CD8-positive, alpha-beta T cell (primary cell): ENCODE measurements at regions of chr10 and their contacts with region 1.

Region 1: DNA sequence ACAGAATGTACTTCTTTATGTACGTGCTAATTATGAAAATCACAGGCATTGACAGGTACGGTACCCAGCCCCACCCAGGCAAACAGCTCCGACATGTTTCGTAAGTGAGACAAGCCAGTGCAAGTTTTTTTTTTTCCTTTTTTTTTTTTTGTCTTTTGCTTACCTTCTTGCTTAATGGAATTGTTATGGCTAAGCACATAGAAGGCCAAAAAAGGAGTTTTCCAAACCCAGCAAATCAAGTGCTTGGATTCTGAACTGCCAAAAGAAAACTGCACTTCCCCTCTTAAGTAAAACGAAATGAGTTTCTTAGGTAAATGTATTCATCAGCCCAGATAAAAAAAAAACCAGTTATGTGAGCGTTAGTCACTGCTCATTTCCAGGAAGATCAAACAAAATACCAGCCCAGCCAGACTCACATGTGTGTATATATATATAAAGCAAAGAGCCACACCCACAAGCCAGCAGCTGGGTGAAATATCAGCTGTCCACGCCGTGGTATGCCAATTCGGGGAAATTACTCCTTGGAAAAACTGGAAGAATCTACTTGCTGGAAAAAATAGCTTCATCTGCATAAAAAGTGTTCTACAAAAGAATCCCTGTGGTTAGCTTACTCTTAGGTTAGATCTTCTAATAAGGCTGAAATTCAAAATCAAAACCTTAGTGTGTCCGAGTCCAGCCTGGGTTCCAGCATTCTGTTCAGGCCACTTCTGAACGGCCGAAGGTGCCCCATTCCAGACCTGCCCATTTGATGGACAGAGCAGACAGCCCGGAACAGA is 8.0 kb downstream of the KLF6 start:
- DNase-seq: peak in 7 of 9 experiments; percentile 41 to 82 (median 55)
- ATAC-seq: peak; percentile 57
- H3K4me3 ChIP-seq: no peak overlapping the region
- H3K4me3 Mint-ChIP-seq: peak overlapping the region; percentile 3
- H3K27ac ChIP-seq: peak overlapping the region; percentile 36 to 93
- H3K27ac Mint-ChIP-seq: peak overlapping the region; percentile 72
- H3K4me1 ChIP-seq: peaks cover 58% of the 10 kb centered on the region
- H3K4me1 Mint-ChIP-seq: peaks cover 61% of the 10 kb centered on the region
- H3K27me3 ChIP-seq: no peaks in the 10 kb centered on the region
- H3K27me3 Mint-ChIP-seq: no peaks in the 10 kb centered on the region
- CTCF ChIP-seq: no peak

Region 2: DNA sequence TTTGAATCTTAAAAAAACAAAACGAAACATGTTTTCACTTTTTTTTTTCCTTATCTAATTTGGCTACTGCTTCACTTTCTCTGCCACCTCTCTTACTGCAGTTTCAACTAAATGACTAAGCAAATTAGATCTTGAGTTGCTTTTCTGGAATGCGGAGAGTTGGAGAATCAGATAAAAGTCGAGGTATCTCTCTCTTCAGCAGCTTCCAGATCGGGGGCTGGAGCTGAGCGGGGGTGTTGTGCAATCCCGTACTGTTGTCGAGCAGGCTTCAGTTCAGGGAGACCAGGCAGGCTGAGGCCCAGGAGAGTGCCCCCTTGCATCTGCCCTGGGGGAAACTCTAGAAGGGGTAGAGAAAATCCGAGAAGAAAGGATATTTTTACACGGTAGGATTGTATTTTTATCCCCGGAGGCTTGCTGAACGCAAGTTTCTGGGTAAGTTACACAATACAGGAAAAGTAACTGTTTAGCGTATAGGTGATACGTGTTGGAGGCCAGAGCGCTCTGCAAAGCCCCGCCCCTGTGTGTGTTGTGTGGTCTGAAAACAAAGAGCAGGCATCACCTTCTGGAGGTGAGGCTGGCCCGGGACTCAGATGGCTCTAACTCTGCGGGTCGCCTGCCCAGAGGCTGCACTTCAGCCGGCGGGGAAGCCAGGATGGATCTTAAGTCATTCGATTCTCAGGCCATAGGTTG is 108.6 kb before region 1 on chr10:
- CTCF ChIA-PET with region 1: no interaction called
- POLR2A ChIA-PET with region 1: interaction called, 4 read pairs
- intact Hi-C with region 1: loop called (anchors 2 to 5 kb)
- DNase-seq: peak; percentile 40 to 88 (median 66)
- ATAC-seq: peak; percentile 94
- H3K4me3 ChIP-seq: peak overlapping the region; percentile 43 to 64
- H3K4me3 Mint-ChIP-seq: peak overlapping the region; percentile 88
- H3K27ac ChIP-seq: peak overlapping the region; percentile 39 to 78
- H3K27ac Mint-ChIP-seq: peak overlapping the region; percentile 94
- H3K4me1 ChIP-seq: peaks cover 33% of the 10 kb centered on the region
- H3K4me1 Mint-ChIP-seq: peaks cover 43% of the 10 kb centered on the region
- H3K27me3 ChIP-seq: no peaks in the 10 kb centered on the region
- H3K27me3 Mint-ChIP-seq: no peaks in the 10 kb centered on the region
- CTCF ChIP-seq: no peak

Region 3: DNA sequence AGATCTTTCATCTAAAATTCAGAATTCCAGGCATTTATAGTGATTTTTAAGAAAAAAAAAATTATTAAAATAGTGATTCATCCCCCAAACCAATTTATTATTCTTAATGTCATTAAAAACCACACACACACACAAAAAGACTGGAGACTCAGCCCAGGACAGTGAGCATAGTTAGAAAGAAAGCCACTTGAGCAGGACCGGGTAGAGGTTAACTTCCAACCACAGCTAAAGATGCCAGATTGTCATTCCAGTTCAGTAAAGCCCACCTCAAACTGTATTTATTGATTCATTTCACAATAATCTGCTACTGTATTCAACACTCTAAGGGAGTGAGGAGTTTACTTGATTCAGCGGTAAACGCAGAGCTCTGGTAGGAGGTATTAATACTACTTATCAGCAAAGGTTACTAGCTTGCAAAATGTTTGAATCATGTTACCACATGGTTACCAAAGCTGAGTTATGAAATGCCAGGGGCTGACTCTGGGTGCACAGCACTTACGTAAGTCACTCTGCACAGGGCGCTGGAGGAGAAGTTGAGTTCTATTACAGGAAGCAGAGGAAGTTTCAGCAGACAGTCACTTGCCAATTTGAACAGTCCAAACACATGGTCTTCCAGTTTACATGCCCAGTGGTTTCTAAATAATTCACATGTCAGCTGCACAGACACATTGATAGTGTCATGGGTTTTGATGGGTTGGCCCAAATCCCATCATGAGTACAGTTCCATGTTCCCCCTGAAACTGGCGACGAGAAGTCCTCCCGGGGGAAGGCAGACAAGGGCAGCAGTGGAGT is 56.6 kb before region 1 on chr10:
- CTCF ChIA-PET with region 1: no interaction called
- POLR2A ChIA-PET with region 1: no interaction called
- intact Hi-C with region 1: no loop called
- DNase-seq: peak in 2 of 9 experiments; percentile 13 to 41
- ATAC-seq: no peak
- H3K4me3 ChIP-seq: no peak overlapping the region
- H3K4me3 Mint-ChIP-seq: no peak overlapping the region
- H3K27ac ChIP-seq: no peak overlapping the region
- H3K27ac Mint-ChIP-seq: no peak overlapping the region
- H3K4me1 ChIP-seq: no peaks in the 10 kb centered on the region
- H3K4me1 Mint-ChIP-seq: no peaks in the 10 kb centered on the region
- H3K27me3 ChIP-seq: no peaks in the 10 kb centered on the region
- H3K27me3 Mint-ChIP-seq: no peaks in the 10 kb centered on the region
- CTCF ChIP-seq: no peak

Region 4: GRCh38 chr10:3757638-3758490 is 19.1 kb before region 1 on chr10:
- CTCF ChIA-PET with region 1: interaction called, 3 read pairs
- POLR2A ChIA-PET with region 1: interaction called, 8 read pairs
- intact Hi-C with region 1: loop called in 1 of 2 experiments (anchors 2 kb)
- DNase-seq: peak in 7 of 9 experiments; percentile 43 to 86 (median 70)
- ATAC-seq: peak; percentile 82
- H3K4me3 ChIP-seq: no peak overlapping the region
- H3K4me3 Mint-ChIP-seq: peak overlapping the region; percentile 50
- H3K27ac ChIP-seq: peak overlapping the region; percentile 16 to 86
- H3K27ac Mint-ChIP-seq: peak overlapping the region; percentile 95
- H3K4me1 ChIP-seq: peaks cover 8% of the 10 kb centered on the region
- H3K4me1 Mint-ChIP-seq: peaks cover 31% of the 10 kb centered on the region
- H3K27me3 ChIP-seq: no peaks in the 10 kb centered on the region
- H3K27me3 Mint-ChIP-seq: no peaks in the 10 kb centered on the region
- CTCF ChIP-seq: no peak

Region 5: DNA sequence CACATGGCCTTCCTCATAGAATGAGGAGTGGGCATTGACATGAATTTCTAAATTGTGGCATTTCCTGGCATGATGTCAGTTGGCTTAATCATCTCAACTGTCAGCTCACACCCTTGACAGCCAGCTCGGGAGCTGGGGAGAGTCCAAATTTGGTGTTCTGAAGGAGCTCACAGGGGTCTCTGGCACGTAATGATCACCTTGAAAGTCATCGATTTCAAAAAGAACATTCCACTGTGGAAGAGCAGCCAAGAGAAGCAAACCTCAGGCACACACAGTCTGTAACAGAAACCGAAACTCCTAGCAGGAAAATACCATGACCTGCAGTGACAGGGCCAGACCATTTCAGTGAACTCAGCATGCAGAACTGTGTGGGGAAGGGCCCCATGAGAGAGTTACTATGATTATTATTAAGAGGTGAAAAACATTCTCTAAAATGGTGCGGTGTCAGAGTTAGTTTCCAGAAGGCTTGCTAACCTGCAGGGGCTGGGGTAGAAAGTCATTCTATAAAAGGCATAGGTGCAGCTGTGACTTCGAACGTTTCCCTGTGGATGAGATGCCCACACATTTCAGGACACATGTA is 34.4 kb after region 1 on chr10:
- CTCF ChIA-PET with region 1: interaction called, 4 read pairs
- POLR2A ChIA-PET with region 1: interaction called, 229 read pairs
- intact Hi-C with region 1: loop called (anchors 5 kb)
- DNase-seq: peak in 4 of 9 experiments; percentile 27 to 78 (median 50)
- ATAC-seq: peak; percentile 34
- H3K4me3 ChIP-seq: peak overlapping the region in 1 of 2 experiments; percentile 15
- H3K4me3 Mint-ChIP-seq: peak overlapping the region; percentile 68
- H3K27ac ChIP-seq: peak overlapping the region; percentile 75 to 98
- H3K27ac Mint-ChIP-seq: peak overlapping the region; percentile 90
- H3K4me1 ChIP-seq: peaks cover 56% of the 10 kb centered on the region
- H3K4me1 Mint-ChIP-seq: peaks cover 62% of the 10 kb centered on the region
- H3K27me3 ChIP-seq: no peaks in the 10 kb centered on the region
- H3K27me3 Mint-ChIP-seq: no peaks in the 10 kb centered on the region
- CTCF ChIP-seq: no peak

Region 6: GRCh38 chr10:4131407-4132228 is 354.6 kb after region 1 on chr10:
- CTCF ChIA-PET with region 1: no interaction called
- POLR2A ChIA-PET with region 1: no interaction called
- intact Hi-C with region 1: no loop called
- DNase-seq: peak in 2 of 9 experiments; percentile 73 to 84
- ATAC-seq: peak; percentile 78
- H3K4me3 ChIP-seq: peak overlapping the region; percentile 9 to 34
- H3K4me3 Mint-ChIP-seq: no peak overlapping the region
- H3K27ac ChIP-seq: peak overlapping the region in 1 of 2 experiments; percentile 50
- H3K27ac Mint-ChIP-seq: no peak overlapping the region
- H3K4me1 ChIP-seq: peaks cover 23% of the 10 kb centered on the region
- H3K4me1 Mint-ChIP-seq: peaks cover 28% of the 10 kb centered on the region
- H3K27me3 ChIP-seq: no peaks in the 10 kb centered on the region
- H3K27me3 Mint-ChIP-seq: peaks cover 2% of the 10 kb centered on the region
- CTCF ChIP-seq: no peak